Esophagus muscularis mucosa (tissue), 4 donors: ENCODE measurements at regions of chr17 and their contacts with region 1.

Region 1: GRCh38 chr17:2179615-2180295 is 123.8 kb downstream of the SMG6 start:
- DNase-seq: peak; percentile 95
- H3K4me3 ChIP-seq: no peak overlapping the region
- H3K27ac ChIP-seq: peak overlapping the region; percentile 83 to 93 (median 89)
- H3K4me1 ChIP-seq: peaks cover 81 to 95% (median 87%) of the 10 kb centered on the region in 4 donors
- H3K27me3 ChIP-seq: no peaks in the 10 kb centered on the region
- CTCF ChIP-seq: no peak
- EP300 ChIP-seq: no peak
- POLR2A ChIP-seq: no peak

Region 2: DNA sequence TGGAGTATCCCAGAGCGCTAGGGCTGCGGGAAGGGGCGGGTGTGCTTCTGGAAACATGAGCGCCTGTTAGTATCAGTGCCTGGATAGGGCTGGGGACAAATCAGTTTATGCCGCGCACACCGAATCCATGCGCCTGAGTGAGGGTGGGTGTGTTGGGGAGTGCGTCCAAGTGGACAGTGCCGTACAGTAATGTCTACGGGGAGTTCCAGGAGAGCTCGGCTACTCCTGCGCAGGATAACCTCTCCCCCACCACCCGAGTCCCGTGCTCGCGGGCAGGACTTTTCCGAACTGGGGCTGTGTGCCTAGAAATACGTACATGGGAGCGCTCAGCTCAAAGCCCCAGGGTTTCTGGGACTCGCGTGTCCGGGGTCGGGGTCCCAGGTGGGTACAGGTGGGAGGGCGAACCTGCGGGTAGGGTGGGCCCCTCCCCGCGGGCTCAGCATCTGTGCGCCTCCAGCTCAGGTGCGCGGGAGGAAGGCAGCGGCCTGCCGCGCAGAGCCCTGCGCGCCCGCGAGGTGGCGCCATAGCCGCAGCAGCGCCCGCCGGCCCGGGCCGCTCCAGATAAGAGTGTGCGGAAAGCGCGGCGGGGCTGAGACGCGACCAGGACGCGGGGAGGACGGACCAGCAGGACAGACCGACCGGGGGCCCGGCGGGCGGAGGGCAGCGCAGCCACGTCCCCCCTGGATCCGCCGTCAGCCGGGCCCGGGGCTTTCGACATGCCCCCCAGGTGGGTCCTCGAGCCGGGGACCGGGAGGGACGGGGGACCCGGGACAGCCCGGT is 125.1 kb before region 1 on chr17 and contains the start of gene HIC1:
- intact Hi-C with region 1: loop called (anchors 5 kb)
- DNase-seq: peak; percentile 94
- H3K4me3 ChIP-seq: peak within 1 kb of the TSS; percentile 66 to 84 (median 72)
- H3K27ac ChIP-seq: peak within 1 kb of the TSS; percentile 90 to 97 (median 92)
- H3K4me1 ChIP-seq: peaks cover 54 to 86% (median 81%) of the 10 kb centered on the region in 4 donors
- H3K27me3 ChIP-seq: peaks cover 0 to 43% (median 0%) of the 10 kb centered on the region in 4 donors
- CTCF ChIP-seq: peak in 2 of 3 experiments; percentile 96 to 98
- EP300 ChIP-seq: no peak
- POLR2A ChIP-seq: peak; percentile 45
- total RNA-seq, gene HIC1: 48.6 to 86.4 (median 54.9) TPM

Region 3: GRCh38 chr17:2214047-2214928 is 34.5 kb after region 1 on chr17:
- intact Hi-C with region 1: loop called (anchors 5 kb)
- DNase-seq: peak; percentile 94
- H3K4me3 ChIP-seq: peak overlapping the region in 3 of 4 donors; percentile 24 to 32 (median 28)
- H3K27ac ChIP-seq: peak overlapping the region; percentile 81 to 92 (median 87)
- H3K4me1 ChIP-seq: peaks cover 48 to 61% (median 50%) of the 10 kb centered on the region in 4 donors
- H3K27me3 ChIP-seq: no peaks in the 10 kb centered on the region
- CTCF ChIP-seq: no peak
- EP300 ChIP-seq: peak; percentile 64
- POLR2A ChIP-seq: no peak

Region 4: DNA sequence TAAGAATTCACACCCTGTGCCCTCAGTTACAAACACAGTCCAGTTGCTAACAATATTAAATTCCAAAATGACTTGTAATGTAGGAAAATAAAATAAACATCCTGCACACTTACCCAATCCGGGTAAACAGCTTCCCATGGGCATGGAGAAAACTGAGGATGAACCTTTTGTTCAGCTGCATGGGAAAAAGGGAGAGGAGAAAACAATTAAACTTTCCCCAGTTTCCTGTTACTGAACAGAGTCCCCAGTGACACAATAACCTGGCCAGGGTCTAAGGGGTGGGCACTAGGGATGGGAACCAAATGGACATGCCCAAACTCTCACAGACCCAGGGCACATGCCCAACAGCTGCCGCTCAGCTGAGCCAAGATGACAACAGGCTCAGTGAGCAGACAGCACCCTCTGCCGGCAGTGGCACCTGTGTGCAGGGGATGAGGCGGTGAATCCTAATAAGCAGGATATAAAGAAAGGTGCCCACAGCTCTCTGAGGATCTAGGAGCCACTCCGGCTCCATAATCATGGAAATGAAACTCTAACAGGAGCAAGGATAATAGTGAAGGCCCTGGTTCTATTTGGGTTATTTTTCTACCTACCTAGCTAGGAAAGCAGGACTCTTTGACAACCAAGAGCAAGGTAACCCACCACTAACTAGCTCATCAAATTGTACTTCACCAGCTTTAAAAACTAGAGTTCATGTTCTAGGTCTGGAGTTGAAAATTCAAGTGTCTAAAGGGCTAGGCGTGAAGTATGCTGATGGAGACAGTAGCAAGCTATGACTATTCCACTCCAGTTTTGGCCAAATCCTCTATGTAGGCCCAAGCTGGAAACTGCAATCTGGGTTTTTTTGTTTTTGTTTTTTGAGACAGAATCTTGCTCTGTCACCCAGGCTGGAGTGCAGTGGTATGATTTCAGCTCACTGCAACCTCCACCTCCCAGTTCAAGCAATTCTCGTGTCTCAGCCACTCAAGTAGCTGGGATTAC is 65.1 kb after region 1 on chr17:
- intact Hi-C with region 1: loop called (anchors 5 kb)
- DNase-seq: peak; percentile 96
- H3K4me3 ChIP-seq: no peak overlapping the region
- H3K27ac ChIP-seq: peak overlapping the region; percentile 56 to 74 (median 69)
- H3K4me1 ChIP-seq: peaks cover 6 to 51% (median 36%) of the 10 kb centered on the region in 4 donors
- H3K27me3 ChIP-seq: no peaks in the 10 kb centered on the region
- CTCF ChIP-seq: peak; percentile 98
- EP300 ChIP-seq: no peak
- POLR2A ChIP-seq: no peak